ENCODE measurements at regions of chr12 and their contacts with region 1.

Region 1: GRCh38 chr12:55738123-55739024 is 4.5 kb upstream of the GDF11 start:
- DNase-seq: peak; percentile 98
- ATAC-seq: peak; percentile 53
- H3K4me3 ChIP-seq: peak overlapping the region; percentile 82
- H3K27ac ChIP-seq: no peak overlapping the region
- H3K4me1 ChIP-seq: peaks cover 14% of the 10 kb centered on the region
- H3K27me3 ChIP-seq: no peaks in the 10 kb centered on the region
- CTCF ChIP-seq: peak; percentile 90

Region 2: DNA sequence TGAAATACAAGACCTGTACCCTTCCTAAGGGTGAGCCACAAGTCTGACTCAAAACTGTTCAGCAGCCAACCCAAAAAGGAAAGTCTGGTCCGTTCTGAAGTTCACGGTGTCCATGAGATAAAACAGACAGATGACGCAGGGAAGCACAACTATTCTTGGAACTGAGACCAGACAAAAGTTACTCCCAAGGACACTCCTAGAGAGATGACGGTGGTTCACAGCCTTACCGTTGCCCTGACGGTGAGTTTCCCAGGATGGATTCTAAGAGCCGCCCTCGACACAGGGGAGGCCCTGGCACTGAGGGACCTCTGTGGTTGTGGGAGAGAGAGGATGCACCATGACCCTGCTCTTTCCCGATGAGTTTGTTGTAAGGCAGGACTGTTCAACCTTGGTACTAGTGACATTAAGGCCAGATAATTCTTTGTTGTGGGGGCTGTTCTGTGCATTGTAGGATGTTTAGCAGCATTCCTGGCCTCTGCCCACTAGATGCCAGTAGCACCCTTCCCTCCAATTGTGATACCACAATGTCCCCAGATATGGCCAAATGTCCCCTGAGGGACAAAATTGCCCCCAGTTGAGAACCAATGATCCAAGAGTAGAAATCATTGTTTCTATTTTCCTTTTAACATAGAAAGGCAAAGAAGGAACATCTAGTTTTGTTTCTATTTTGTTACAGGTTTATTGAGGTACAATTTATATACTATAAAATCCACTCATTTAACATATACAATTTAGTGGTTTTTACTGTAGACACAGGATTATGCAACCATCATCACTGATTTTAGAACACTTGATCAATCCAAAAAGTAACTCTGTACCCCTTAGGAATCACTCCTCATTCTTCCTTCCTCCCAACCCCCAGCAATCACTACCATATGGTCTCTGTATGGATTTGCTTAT is 78.6 kb before region 1 on chr12:
- CTCF ChIA-PET with region 1: interaction called, 4 read pairs
- POLR2A ChIA-PET with region 1: no interaction called
- intact Hi-C with region 1: loop called (anchors 1 kb)
- DNase-seq: peak; percentile 56
- ATAC-seq: peak; percentile 77
- H3K4me3 ChIP-seq: no peak overlapping the region
- H3K27ac ChIP-seq: no peak overlapping the region
- H3K4me1 ChIP-seq: no peaks in the 10 kb centered on the region
- H3K27me3 ChIP-seq: no peaks in the 10 kb centered on the region
- CTCF ChIP-seq: peak; percentile 73

Region 3: GRCh38 chr12:55720894-55721444 is 17.4 kb before region 1 on chr12:
- CTCF ChIA-PET with region 1: interaction called, 25 read pairs
- POLR2A ChIA-PET with region 1: no interaction called
- intact Hi-C with region 1: no loop called
- DNase-seq: peak; percentile 98
- ATAC-seq: peak; percentile 81
- H3K4me3 ChIP-seq: peak overlapping the region; percentile 31; the same call in 1 of the 2 replicates
- H3K27ac ChIP-seq: peak overlapping the region; percentile 52
- H3K4me1 ChIP-seq: peaks cover 64% of the 10 kb centered on the region
- H3K27me3 ChIP-seq: no peaks in the 10 kb centered on the region
- CTCF ChIP-seq: peak; percentile 83

Region 4: DNA sequence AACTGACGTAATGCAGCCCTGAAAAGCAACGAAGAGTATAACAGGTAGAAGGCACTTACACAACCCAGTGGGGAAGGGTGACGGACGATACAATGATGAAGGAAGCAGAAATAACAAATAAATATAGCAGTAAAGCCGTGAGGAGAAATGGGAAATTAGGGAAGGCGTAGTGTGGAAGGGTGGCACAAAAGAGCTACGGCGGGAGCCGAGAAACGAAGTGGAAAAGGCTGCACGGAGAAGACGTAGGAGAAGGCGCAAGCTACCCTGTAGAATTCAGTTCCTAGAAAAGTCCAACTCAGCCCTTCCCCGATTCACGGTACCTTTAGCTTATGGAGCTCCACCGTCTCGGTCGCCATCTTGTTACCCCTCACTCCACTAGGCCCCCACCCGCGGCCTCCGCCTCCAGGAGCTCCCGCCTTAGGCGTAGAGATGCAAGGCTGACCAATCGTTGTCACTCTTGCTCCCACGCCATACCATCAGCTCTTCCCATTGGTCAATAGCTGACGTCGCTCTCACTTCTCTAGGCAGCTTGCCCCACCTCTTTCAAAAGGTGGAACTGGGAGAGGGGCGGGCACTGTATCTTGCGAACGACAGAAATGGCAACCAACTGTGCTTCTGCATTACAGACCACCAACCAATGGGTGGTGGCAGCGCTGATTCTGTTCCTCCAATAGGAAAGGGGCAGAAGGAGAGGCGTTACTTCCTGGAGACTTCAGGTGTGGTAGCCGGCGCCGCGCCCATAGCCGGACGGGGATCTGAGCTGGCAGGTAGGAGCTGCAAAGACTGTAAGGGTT is 79.2 kb after region 1 on chr12 and contains the starts of genes ORMDL2 and SARNP:
- CTCF ChIA-PET with region 1: interaction called, 4 read pairs
- POLR2A ChIA-PET with region 1: no interaction called
- intact Hi-C with region 1: loop called (anchors 5 kb)
- DNase-seq: peak; percentile 100
- ATAC-seq: peak; percentile 94
- H3K4me3 ChIP-seq: peak within 1 kb of the TSS; percentile 94
- H3K27ac ChIP-seq: peak within 1 kb of the TSS; percentile 51
- H3K4me1 ChIP-seq: peaks cover 21% of the 10 kb centered on the region
- H3K27me3 ChIP-seq: no peaks in the 10 kb centered on the region
- CTCF ChIP-seq: no peak
- total RNA-seq, gene ORMDL2: 19.2 and 30.6 TPM in 2 replicates
- total RNA-seq, gene SARNP: 103 and 108 TPM in 2 replicates

Region 5: GRCh38 chr12:55865327-55865726 is 127.0 kb after region 1 on chr12:
- CTCF ChIA-PET with region 1: no interaction called
- POLR2A ChIA-PET with region 1: no interaction called
- intact Hi-C with region 1: no loop called
- DNase-seq: no peak
- ATAC-seq: no peak
- H3K4me3 ChIP-seq: no peak overlapping the region
- H3K27ac ChIP-seq: no peak overlapping the region
- H3K4me1 ChIP-seq: no peaks in the 10 kb centered on the region
- H3K27me3 ChIP-seq: no peaks in the 10 kb centered on the region
- CTCF ChIP-seq: no peak

Region 6: DNA sequence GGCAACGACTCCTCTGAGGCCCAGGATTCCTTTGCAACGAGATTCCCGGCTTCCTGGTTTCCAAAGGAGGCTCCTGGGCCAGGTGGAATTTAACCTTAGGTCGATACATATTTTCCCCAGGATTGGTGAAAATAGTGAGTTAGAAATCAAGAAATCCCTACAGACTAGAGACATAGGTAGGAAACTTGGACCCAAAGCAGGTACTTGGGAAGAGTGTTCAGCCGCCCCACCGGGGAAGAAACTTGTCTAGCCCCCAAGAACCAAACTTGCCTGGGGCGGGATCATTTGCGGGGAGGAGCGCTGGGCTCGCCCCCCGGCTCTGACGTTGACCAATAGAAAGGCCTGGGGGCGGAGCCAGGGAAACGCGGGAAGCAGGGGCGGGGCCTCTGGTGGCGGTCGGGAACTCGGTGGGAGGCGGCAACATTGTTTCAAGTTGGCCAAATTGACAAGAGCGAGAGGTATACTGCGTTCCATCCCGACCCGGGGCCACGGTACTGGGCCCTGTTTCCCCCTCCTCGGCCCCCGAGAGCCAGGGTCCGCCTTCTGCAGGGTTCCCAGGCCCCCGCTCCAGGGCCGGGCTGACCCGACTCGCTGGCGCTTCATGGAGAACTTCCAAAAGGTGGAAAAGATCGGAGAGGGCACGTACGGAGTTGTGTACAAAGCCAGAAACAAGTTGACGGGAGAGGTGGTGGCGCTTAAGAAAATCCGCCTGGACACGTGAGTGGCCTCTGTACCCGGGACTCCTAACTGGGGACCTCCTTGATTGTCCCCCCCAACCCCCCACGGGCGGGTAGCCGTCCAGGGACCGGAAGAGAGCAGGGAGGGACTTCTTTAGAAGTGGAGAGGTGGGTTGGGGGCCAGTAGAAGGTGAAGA is 228.3 kb after region 1 on chr12 and contains the start of gene CDK2:
- CTCF ChIA-PET with region 1: interaction called, 14 read pairs
- POLR2A ChIA-PET with region 1: no interaction called
- intact Hi-C with region 1: no loop called
- DNase-seq: peak; percentile 86
- ATAC-seq: peak; percentile 96
- H3K4me3 ChIP-seq: peak within 1 kb of the TSS; percentile 80
- H3K27ac ChIP-seq: no peak within 1 kb of the TSS; the same call in 1 of the 2 replicates
- H3K4me1 ChIP-seq: peaks cover 24% of the 10 kb centered on the region
- H3K27me3 ChIP-seq: no peaks in the 10 kb centered on the region
- CTCF ChIP-seq: no peak
- total RNA-seq, gene CDK2: 63.0 and 68.2 TPM in 2 replicates

Region 7: DNA sequence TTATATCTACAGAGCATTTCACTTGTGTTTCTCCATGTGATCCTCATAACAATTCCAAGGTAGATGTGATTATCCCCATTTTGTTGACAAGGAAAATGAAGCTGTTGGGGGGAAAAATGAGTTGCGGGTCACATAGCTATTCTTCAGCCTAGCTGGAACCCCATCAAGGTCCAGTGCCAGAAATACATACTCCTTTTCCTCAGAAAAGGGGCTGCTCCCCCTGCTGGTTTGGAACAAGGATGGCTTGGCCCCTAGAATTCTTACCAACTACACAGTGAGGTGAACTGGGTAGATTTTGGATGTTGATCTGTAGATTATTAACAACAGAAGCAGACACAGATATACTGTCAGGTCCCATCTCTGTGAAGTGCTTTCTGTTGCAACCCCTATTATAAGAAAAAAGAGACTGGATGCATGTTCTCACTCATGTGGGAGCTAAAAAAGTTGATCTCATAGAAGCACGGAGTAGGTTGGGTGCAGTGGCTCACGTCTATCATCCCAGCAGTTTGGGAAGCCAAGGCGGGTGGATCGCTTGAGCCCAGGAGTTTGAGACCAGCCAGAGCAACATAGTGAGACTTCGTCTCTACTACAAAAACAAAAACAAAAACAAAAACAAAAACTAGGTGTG is 291.4 kb after region 1 on chr12:
- CTCF ChIA-PET with region 1: interaction called, 4 read pairs
- POLR2A ChIA-PET with region 1: no interaction called
- intact Hi-C with region 1: loop called (anchors 1 kb)
- DNase-seq: peak; percentile 59
- ATAC-seq: peak; percentile 81
- H3K4me3 ChIP-seq: no peak overlapping the region
- H3K27ac ChIP-seq: peak overlapping the region; percentile 27
- H3K4me1 ChIP-seq: peaks cover 17% of the 10 kb centered on the region
- H3K27me3 ChIP-seq: no peaks in the 10 kb centered on the region
- CTCF ChIP-seq: peak; percentile 85